HepG2 (cell line): ENCODE measurements at regions of chr1 and their contacts with region 1.

Region 1: DNA sequence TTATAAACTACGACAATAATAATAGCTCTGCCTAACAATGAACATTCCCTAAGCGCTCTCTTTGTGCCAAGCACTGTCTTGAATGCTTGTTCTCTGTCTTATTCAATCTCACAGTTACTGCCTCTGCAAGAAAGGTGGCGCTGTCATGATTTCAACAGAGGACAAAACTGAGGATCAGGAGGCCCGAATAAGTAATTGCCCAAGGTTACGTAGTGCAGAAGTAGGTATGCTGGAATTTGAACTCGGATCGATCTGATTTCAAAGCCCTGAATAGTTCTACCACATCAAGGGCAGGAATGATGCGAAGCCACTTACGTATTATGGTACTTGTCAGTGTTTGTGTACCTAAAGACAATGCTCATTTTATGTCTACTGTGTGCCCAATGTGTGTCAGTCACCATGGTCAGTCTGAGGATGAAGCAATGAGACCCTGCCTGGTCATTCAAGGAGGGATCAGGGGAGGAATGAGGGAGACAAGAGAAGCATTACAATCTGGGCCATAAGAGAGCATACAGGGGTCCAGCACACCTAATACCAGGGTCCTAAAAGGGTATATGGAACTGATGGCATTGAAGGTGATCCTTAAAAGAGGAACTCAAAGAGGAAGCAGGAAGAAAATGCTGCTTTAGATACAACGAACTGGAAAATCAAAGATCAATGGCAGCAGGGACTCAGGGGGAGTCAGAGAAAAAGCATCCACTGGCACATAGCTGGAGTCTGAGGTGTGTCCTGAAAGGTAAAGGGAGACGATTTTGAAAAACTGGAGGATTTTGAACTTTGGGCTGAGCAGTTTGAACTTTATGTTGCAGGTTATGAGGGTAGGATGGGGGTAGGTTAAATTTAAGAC is 389.2 kb downstream of the PLPP3 start:
- DNase-seq: peak; percentile 99
- ATAC-seq: peak; percentile 94
- H3K4me3 ChIP-seq: peak overlapping the region; percentile 52 to 65 (median 58); a peak in 5 of 6 replicates
- H3K27ac ChIP-seq: peak overlapping the region; percentile 91
- H3K4me1 ChIP-seq: peaks cover 47% of the 10 kb centered on the region
- H3K27me3 ChIP-seq: no peaks in the 10 kb centered on the region
- CTCF ChIP-seq: peak; percentile 86
- EP300 ChIP-seq: peak; percentile 98 to 99
- POLR2A ChIP-seq: peak in 1 of 2 experiments; percentile 94; a peak in 2 of 4 replicates
- RAD21 ChIP-seq: peak; percentile 71

Region 2: GRCh38 chr1:56330391-56331026 is 140.3 kb after region 1 on chr1:
- CTCF ChIA-PET with region 1: no interaction called
- POLR2A ChIA-PET with region 1: interaction called, 11 read pairs
- in situ Hi-C with region 1: no loop called
- intact Hi-C with region 1: loop called (anchors 1 kb)
- DNase-seq: peak; percentile 47
- ATAC-seq: no peak; the same call in 2 of the 3 replicates
- H3K4me3 ChIP-seq: peak overlapping the region in 1 of 3 experiments; percentile 47; a peak in 1 of 6 replicates
- H3K27ac ChIP-seq: peak overlapping the region; percentile 85
- H3K4me1 ChIP-seq: peaks cover 39% of the 10 kb centered on the region
- H3K27me3 ChIP-seq: no peaks in the 10 kb centered on the region
- CTCF ChIP-seq: no peak
- EP300 ChIP-seq: no peak
- POLR2A ChIP-seq: no peak
- RAD21 ChIP-seq: no peak